OCI-LY7 (cell line): ENCODE measurements at regions of chr12 and their contacts with region 1.

Region 1: DNA sequence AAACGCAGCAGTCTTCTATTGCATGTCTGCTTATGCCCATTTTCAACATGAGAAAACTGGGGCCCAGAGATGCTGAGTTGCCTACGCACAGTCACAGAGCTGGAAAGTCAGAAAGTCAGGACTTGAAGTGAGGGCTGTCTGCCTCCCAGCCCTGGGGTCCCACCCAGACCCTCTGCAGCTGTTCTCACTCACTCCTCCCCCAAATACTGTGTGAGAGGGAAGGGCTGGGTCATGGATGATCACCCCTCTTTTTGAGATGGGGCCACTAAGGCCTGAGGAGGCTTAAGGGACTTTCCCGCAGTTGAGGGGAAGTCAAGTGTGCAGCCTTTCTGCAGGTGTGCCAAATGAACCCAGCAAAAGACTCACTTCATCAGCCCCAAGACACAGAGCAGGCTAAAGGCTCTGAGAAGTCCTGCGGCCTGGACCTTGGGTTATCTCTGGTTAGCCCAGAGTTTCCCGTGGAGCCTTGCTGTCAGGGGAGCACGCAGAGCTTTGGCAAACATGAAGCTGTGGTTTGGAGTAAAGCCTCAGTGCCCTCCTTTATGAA is 18.7 kb downstream of the DTX1 start:
- DNase-seq: peak; percentile 99
- H3K4me3 ChIP-seq: peak overlapping the region; percentile 34
- H3K27ac ChIP-seq: peak overlapping the region; percentile 97
- H3K4me1 ChIP-seq: peaks cover 95% of the 10 kb centered on the region
- CTCF ChIP-seq: no peak

Region 2: DNA sequence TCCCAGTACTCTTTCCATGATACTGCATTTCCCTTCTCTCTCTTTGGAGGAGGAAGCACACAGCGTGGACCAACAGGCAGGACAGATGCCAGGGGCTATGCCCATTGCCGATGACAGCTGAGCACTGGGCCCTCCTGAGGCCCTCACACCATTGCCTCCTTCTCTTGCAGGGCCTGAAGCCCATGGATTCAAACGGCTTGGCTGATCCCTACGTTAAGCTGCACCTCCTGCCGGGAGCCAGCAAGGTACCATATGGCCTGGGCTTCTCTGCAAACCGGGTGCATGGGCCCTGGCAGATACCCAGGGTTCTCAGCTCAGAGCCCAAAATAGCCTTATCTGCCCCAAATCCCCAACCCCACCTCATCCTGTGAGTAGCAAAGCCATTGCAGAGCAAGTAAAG is 193.6 kb before region 1 on chr12:
- CTCF ChIA-PET with region 1: no interaction called
- POLR2A ChIA-PET with region 1: no interaction called
- intact Hi-C with region 1: no loop called
- DNase-seq: no peak
- H3K4me3 ChIP-seq: no peak overlapping the region
- H3K27ac ChIP-seq: no peak overlapping the region
- H3K4me1 ChIP-seq: no peaks in the 10 kb centered on the region
- CTCF ChIP-seq: no peak

Region 3: DNA sequence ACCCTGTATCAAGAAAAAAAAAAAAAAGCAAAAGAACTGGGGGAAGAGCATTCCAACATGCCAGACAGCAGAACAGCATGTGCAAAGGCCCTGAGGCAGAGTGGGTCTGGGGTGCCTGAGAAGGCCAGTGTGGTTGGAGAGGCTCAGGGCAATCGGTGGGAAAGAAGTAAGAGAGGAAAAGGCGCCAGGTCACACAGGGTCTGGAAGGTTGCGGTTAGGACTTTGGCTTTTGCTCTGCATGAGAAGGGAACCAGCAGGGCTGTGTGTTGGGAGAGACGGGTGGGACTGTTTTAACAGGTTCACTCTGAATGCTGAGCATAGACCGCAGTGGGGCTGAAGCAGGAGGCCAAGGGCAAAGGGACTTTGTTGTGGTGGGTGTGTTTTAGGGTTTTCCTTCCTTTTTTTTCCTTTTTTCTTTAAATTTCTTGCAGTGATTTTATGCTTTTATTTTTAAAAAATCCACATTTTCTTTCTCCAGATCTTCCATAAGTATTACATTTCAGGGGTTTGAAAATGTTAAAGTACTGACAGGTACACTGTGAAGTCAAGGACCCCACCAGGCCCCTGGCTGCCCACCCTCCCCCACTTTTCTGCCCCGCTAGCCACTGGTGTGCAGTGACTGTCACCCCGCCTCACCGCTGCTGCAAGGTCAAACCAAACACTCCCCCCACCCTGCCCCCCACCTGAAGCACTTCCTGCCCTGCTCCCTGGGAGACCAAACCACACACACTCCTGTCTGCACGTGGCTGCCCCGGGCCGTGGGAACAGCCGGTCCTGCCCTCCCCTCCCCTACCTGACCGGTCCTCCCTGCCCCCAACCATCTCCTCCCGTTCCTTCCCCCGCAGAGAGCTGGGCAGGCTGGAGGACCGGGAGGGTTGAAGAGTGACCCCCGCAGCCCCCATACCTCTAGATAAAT is 11.3 kb after region 1 on chr12:
- CTCF ChIA-PET with region 1: no interaction called
- POLR2A ChIA-PET with region 1: interaction called, 18 read pairs
- intact Hi-C with region 1: loop called (anchors 1 kb)
- DNase-seq: peak; percentile 88
- H3K4me3 ChIP-seq: peak overlapping the region; percentile 37
- H3K27ac ChIP-seq: peak overlapping the region; percentile 97
- H3K4me1 ChIP-seq: peaks cover 100% of the 10 kb centered on the region
- CTCF ChIP-seq: no peak

Region 4: DNA sequence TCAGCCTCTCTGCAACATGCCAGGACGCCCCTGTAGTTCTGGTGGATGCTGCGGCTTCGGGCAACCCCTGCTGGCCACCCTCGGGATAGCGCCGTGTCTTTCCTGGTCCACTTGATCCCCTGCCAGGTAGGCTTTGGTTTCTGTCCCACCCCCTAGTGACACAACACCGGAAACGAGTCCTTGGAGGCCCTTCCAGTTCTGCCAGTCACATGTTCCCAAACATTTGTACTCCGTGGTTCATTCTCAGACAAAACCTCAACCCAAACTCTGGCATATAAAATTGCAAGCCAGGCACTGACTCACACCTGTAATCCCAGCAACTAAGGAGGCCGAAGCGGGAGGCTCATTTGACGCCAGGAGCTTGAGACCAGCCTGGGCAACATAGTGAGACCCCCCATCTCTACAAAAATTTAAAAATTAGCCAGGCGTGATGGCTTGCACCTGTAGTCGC is 23.3 kb after region 1 on chr12:
- CTCF ChIA-PET with region 1: interaction called, 5 read pairs
- POLR2A ChIA-PET with region 1: interaction called, 3 read pairs
- intact Hi-C with region 1: loop called (anchors 2 kb)
- DNase-seq: peak; percentile 82
- H3K4me3 ChIP-seq: no peak overlapping the region
- H3K27ac ChIP-seq: peak overlapping the region; percentile 88
- H3K4me1 ChIP-seq: peaks cover 75% of the 10 kb centered on the region
- CTCF ChIP-seq: peak; percentile 91